PC-3 (cell line): ENCODE measurements at regions of chr10 and their contacts with region 1.

Region 1: DNA sequence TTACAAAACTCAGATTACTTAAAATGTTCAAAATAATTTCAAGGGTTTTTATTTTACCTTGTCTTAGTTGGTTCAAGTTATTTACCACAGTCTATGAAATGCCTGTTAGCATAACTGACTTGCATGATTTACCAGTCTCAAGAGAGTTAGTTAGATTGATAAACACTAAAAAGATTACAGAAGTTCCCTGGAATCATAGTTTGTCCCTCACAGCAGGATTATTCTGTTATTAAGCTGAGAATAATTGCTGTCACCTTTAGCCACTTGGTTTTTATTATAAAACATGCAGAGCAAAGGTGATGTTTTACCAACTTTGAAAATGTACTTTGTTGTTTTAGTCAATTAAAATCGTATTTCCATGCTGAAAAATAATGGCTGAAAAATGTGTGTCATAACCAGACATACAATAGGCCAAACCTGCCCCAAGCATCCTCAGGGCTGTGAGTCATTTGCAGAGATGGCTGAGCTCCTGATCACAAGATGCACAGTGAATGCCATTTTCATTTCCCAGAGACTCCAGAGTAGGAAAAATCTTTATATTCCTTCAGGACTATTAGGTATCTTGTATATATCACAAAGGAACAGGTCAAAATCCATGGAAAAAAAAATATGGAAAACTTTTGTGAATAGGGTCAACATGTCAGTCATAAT is 87.8 kb upstream of the DKK1 start:
- DNase-seq: peak; percentile 83
- ATAC-seq: peak; percentile 89
- H3K4me3 ChIP-seq: no peak overlapping the region
- H3K27ac ChIP-seq: 0 out of 2 replicates have a peak overlapping the region, but pooled peaks have one; percentile 0
- H3K4me1 ChIP-seq: peaks cover 25% of the 10 kb centered on the region
- H3K27me3 ChIP-seq: no peaks in the 10 kb centered on the region
- CTCF ChIP-seq: no peak

Region 2: DNA sequence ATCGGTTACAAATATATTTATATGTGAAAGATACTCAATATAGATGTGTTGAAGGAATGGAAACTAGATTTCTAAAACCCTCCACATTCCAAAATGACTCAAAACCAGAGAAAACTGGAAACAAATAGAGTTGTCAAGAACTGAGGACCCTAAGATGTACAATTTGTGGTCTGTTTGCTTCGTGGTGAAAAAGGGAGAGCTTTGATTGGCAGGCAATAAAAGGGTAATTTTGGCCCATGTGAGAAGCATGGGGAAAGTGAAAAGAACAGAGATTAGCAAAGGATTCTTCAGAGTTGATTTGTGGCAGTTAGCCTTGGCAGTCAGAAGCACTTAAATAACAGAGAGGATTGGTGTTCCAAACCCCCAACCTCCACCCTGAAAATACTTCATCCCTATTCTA is 50.7 kb after region 1 on chr10:
- CTCF ChIA-PET with region 1: no interaction called
- POLR2A ChIA-PET with region 1: no interaction called
- intact Hi-C with region 1: loop called (anchors 1 kb)
- DNase-seq: no peak
- ATAC-seq: no peak
- H3K4me3 ChIP-seq: no peak overlapping the region
- H3K27ac ChIP-seq: no peak overlapping the region
- H3K4me1 ChIP-seq: no peaks in the 10 kb centered on the region
- H3K27me3 ChIP-seq: no peaks in the 10 kb centered on the region
- CTCF ChIP-seq: no peak